HepG2 (cell line): ENCODE measurements at regions of chr1 and their contacts with region 1.

Region 1: DNA sequence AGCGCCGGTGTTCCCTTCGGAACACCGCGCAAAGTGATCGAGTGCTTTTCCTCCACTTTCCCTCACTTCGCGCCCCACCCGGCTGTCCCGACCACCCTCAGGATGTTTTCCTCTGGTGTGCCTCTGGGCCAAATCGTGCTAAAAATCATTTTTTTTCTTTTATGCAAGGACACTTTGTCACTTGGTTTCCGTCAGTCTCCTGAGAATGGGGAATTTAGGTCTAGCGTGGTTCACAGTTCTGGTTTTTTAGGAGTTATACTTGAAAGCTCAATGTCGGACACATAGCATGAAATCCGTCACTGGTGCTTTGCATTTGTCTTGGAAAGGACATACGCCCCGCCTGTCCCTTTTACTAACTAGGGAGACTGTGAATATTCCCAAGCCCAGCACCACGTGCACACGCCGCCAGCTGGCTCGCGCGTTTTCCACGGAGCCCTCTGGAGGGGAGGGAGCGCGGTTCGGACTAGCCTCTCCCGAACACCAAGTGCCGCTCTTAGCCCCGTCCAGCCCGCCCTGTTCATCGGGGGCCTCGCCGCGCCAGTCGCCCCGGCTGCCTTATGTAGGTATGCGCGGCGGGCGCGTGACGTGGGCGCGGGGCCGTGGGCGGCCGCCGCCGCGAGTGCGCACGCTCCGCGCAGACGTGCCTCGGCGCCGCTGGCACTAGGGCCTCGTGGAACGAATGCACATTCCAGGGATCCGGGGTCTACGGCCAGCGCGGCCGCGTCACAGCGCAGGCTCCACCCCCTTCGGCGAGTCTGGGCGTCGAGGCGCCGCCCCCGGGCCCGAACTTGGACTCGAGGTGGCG is 572 bp upstream of the IRF2BP2 start:
- DNase-seq: peak; percentile 90
- ATAC-seq: peak; percentile 56
- H3K4me3 ChIP-seq: peak overlapping the region; percentile 35 to 71 (median 40)
- H3K27ac ChIP-seq: peak overlapping the region; percentile 99
- H3K4me1 ChIP-seq: peaks cover 47% of the 10 kb centered on the region
- H3K27me3 ChIP-seq: no peaks in the 10 kb centered on the region; a peak in 2 of 5 replicates
- CTCF ChIP-seq: peak; percentile 31
- EP300 ChIP-seq: 0 out of 4 replicates have a peak, but pooled peaks of 1 of the 2 experiments have one; percentile 16
- POLR2A ChIP-seq: peak in 1 of 2 experiments; percentile 82; a peak in 2 of 4 replicates
- RAD21 ChIP-seq: peak; percentile 7; the same call in 1 of the 2 replicates

Region 2: GRCh38 chr1:234624724-234625117 is 14.2 kb after region 1 on chr1:
- CTCF ChIA-PET with region 1: no interaction called
- POLR2A ChIA-PET with region 1: interaction called, 142 read pairs
- in situ Hi-C with region 1: no loop called
- intact Hi-C with region 1: loop called (anchors 1 kb)
- DNase-seq: no peak
- ATAC-seq: no peak
- H3K4me3 ChIP-seq: no peak overlapping the region; a peak in 1 of 6 replicates
- H3K27ac ChIP-seq: peak overlapping the region; percentile 99
- H3K4me1 ChIP-seq: peaks cover 96% of the 10 kb centered on the region
- H3K27me3 ChIP-seq: no peaks in the 10 kb centered on the region
- CTCF ChIP-seq: no peak
- EP300 ChIP-seq: no peak
- POLR2A ChIP-seq: no peak
- RAD21 ChIP-seq: no peak

Region 3: GRCh38 chr1:234683861-234684632 is 73.5 kb after region 1 on chr1:
- CTCF ChIA-PET with region 1: no interaction called
- POLR2A ChIA-PET with region 1: interaction called, 19 read pairs
- in situ Hi-C with region 1: no loop called
- intact Hi-C with region 1: loop called (anchors 5 kb)
- DNase-seq: peak; percentile 97
- ATAC-seq: peak; percentile 100
- H3K4me3 ChIP-seq: no peak overlapping the region
- H3K27ac ChIP-seq: peak overlapping the region; percentile 87
- H3K4me1 ChIP-seq: peaks cover 21% of the 10 kb centered on the region
- H3K27me3 ChIP-seq: no peaks in the 10 kb centered on the region
- CTCF ChIP-seq: 0 out of 2 replicates have a peak, but pooled peaks have one; percentile 22
- EP300 ChIP-seq: peak; percentile 79 to 93; a peak in 3 of 4 replicates
- POLR2A ChIP-seq: no peak
- RAD21 ChIP-seq: no peak; the same call in 1 of the 2 replicates

Region 4: DNA sequence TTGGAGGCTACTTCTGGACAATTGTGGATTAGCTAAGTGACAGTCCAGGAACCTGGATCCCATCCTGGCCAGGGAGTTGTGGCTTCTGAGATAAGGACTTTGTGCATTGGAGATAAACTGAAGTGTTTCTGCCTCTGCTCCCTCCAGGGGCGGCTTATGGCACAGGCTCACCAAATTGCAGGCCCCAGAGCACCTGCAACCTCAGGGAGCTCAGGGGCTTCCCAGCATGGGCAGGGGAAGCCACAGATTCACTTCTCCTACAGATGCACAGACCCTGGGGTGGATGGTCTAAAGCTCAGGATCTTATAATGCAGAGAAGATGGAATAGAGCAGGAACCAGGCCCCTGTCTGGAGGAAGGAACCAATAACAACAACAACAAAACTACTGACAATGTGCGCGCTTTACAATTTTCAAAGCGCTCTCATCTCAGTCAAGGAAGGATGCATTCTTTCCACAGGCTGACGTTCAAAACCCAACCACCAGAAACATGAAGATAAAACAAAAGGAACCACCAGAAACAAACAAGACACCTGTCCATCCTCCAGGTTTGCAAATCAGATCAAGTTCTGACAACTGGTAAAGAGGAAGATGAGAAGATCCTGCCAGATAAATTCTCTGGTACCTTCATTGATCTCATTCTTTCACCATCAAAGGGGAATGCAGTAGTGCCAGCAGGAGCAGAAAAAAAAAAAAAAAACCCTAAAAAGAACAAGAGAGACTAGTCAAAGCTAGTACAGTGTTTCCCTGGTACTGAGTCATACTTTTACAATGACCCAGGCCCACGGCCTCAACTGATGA is 120.4 kb after region 1 on chr1:
- CTCF ChIA-PET with region 1: no interaction called
- POLR2A ChIA-PET with region 1: interaction called, 1,137 read pairs
- in situ Hi-C with region 1: no loop called
- intact Hi-C with region 1: no loop called
- DNase-seq: peak; percentile 59
- ATAC-seq: peak; percentile 47
- H3K4me3 ChIP-seq: no peak overlapping the region
- H3K27ac ChIP-seq: peak overlapping the region; percentile 36
- H3K4me1 ChIP-seq: peaks cover 96% of the 10 kb centered on the region
- H3K27me3 ChIP-seq: no peaks in the 10 kb centered on the region
- CTCF ChIP-seq: no peak
- EP300 ChIP-seq: peak in 1 of 2 experiments; percentile 9; a peak in 1 of 4 replicates
- POLR2A ChIP-seq: no peak
- RAD21 ChIP-seq: no peak

Region 5: DNA sequence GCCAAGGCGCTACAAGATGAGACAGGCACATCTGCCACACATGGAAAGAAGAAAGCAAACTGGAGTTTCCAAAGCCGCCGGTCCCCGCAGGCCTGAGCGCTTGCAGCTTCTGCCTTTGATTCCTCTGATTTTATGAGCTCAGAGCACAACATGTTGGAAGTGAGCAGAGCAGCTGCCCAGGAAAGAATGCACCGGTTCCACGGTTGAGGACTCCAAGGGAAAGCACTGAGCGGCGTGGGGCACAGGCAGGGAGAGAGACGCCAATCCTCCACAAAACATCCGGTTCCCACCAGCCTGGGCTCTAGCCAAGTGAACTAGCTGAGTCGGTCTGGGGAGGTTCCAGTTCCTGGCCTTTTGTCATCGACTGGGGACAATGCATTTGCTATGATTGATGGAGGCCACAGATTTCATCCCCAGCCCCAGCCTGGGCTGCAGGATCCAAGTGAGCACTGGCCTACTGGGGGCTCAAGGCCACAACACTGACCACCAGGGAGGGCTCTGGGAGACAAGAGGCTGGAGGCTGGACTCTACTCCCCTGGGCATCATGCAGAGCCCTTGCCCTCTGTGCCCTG is 252.5 kb after region 1 on chr1:
- CTCF ChIA-PET with region 1: no interaction called
- POLR2A ChIA-PET with region 1: interaction called, 15 read pairs
- in situ Hi-C with region 1: no loop called
- intact Hi-C with region 1: no loop called
- DNase-seq: peak; percentile 65
- ATAC-seq: peak; percentile 86
- H3K4me3 ChIP-seq: peak overlapping the region; percentile 6 to 47 (median 27); a peak in 4 of 6 replicates
- H3K27ac ChIP-seq: peak overlapping the region; percentile 84
- H3K4me1 ChIP-seq: peaks cover 69% of the 10 kb centered on the region
- H3K27me3 ChIP-seq: no peaks in the 10 kb centered on the region
- CTCF ChIP-seq: no peak
- EP300 ChIP-seq: no peak; a peak in 1 of 4 replicates
- POLR2A ChIP-seq: peak in 1 of 2 experiments; percentile 37; a peak in 1 of 4 replicates
- RAD21 ChIP-seq: no peak

Region 6: GRCh38 chr1:234987415-234988154 is 377.0 kb after region 1 on chr1:
- CTCF ChIA-PET with region 1: no interaction called
- POLR2A ChIA-PET with region 1: interaction called, 27 read pairs
- in situ Hi-C with region 1: no loop called
- intact Hi-C with region 1: no loop called
- DNase-seq: peak; percentile 95
- ATAC-seq: peak; percentile 97
- H3K4me3 ChIP-seq: peak overlapping the region; percentile 13 to 53 (median 24); a peak in 4 of 6 replicates
- H3K27ac ChIP-seq: peak overlapping the region; percentile 95
- H3K4me1 ChIP-seq: peaks cover 93% of the 10 kb centered on the region
- H3K27me3 ChIP-seq: no peaks in the 10 kb centered on the region
- CTCF ChIP-seq: 0 out of 2 replicates have a peak, but pooled peaks have one; percentile 9
- EP300 ChIP-seq: peak; percentile 62 to 68; a peak in 2 of 4 replicates
- POLR2A ChIP-seq: peak; percentile 55 to 80; a peak in 3 of 4 replicates
- RAD21 ChIP-seq: 0 out of 2 replicates have a peak, but pooled peaks have one; percentile 19